Lower leg skin (tissue), 4 donors: ENCODE measurements at regions of chr11 and their contacts with region 1.

Region 1: DNA sequence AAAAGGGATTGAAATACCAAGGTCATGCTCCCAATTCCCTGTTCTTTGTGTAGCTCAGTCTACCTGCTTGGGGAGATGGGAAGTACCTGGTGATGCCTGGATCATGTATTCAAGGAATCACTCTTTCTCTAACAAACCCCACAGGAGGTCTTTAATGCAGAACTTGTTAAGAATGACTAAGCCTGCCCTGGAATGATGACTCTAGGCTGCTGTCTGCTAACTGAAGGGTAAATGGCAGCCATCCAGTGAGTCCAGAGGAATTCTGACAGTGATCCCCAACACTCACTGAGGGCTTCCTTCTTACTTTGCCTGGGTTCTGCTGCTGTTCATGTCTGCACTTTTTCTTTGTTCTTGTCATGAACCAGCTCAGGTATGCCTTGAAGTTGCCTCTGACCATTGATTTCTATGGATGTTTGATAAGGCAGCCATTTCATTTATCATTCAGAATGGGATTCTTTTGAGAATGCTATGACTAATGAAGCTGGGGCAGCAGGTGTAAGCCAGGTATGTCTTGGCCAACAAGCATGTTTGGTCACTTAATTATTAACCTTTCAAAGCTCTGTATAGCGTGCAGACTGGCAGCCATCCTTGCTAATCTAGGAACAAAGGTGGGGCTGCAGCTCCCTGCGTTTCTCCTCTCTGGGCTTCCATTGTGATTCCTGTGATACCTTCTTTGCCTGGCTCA is 11.4 kb downstream of the PRSS23 start:
- DNase-seq: no peak
- H3K4me3 ChIP-seq: no peak overlapping the region
- CTCF ChIP-seq: no peak
- POLR2A ChIP-seq: no peak

Region 2: DNA sequence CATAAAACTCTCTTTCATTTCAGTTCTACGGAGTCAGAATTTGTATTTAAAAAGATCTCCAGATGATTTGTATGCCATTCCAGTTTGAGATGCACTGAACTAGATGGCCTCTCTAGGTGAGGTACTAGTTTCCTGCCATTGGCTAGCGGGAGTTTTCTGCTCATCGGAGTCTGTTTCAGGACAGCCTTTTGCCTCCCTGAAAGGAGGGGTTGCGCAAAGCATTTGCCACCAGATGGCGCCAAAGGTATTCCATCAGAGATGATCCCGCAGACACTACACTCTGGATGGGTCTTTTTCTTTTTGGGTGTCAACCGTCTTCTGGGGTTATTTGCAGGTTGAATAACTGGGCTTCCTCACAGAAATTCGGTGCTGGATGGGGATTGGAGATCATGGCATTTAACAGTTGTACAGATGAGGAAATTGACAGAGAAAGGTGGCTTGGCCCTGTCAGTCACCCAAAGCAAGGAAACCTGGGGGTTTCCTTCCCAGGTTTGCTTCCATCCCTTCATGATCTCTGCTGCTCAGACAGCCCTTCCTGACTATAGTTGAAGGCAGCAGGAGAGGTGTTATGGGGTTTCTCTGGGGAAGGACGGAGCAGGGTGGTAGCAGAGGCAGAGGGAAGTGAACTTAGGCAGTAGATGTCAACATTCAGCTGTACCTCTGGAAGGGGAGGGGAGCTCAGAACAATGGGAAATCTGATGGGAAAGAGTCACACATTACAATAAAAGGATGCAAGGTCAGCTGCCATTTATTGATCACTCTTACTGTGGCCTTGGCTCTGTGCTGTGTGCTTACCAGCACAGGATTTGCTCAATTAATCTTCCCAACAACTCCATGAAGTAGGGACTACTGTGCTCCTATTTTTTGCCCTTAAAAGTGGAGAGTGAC is 355.5 kb before region 1 on chr11:
- intact Hi-C with region 1: loop called (anchors 5 kb)
- DNase-seq: peak; percentile 83 to 97
- H3K4me3 ChIP-seq: no peak overlapping the region
- CTCF ChIP-seq: peak in 1 of 3 donors; percentile 90
- POLR2A ChIP-seq: no peak

Region 3: GRCh38 chr11:86608251-86608799 is 203.5 kb before region 1 on chr11:
- intact Hi-C with region 1: loop called (anchors 5 kb)
- DNase-seq: peak; percentile 64 to 90
- H3K4me3 ChIP-seq: no peak overlapping the region
- CTCF ChIP-seq: peak in 1 of 3 donors; percentile 73
- POLR2A ChIP-seq: no peak